B cell (primary cell): ENCODE measurements at regions of chr1 and their contacts with region 1.

Region 1: GRCh38 chr1:186985889-186986491 is 157.2 kb downstream of the PLA2G4A start:
- DNase-seq: peak; percentile 50
- ATAC-seq: no peak
- H3K4me3 ChIP-seq: no peak overlapping the region
- H3K4me3 Mint-ChIP-seq: no peak overlapping the region
- H3K27ac ChIP-seq: no peak overlapping the region
- H3K27ac Mint-ChIP-seq: no peak overlapping the region
- H3K4me1 ChIP-seq: no peaks in the 10 kb centered on the region
- H3K4me1 Mint-ChIP-seq: no peaks in the 10 kb centered on the region
- H3K27me3 ChIP-seq: no peaks in the 10 kb centered on the region
- H3K27me3 Mint-ChIP-seq: no peaks in the 10 kb centered on the region
- CTCF ChIP-seq: peak; percentile 78

Region 2: DNA sequence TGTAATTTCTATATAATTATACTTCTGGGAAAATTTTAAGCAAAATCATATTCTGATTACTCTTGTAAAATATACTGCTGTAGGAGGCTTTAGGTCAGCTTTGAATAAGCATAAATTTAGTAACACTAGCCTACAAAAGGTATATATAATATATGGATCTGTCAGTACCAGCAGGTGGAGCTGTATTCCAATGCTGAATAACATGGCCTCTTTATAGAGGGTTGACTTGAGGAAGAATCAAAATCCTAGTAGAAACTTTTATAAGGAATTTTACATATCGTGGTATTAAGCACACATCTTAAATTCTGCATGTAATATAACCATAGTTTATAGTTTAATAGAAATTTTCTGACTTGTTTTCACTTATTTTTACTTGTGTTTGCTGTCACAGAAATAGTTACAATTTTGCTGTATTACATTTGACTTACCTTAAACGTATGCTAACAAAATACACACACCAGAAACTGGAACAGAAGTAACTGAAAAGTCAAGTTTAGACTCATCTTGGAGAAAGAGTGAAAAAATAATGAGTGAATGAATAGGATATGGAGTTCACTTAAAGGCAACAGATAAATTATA is 1172.5 kb before region 1 on chr1:
- CTCF ChIA-PET with region 1: no interaction called
- POLR2A ChIA-PET with region 1: no interaction called
- intact Hi-C with region 1: loop called (anchors 5 kb)
- DNase-seq: peak; percentile 28
- ATAC-seq: no peak
- H3K4me3 ChIP-seq: no peak overlapping the region
- H3K4me3 Mint-ChIP-seq: no peak overlapping the region
- H3K27ac ChIP-seq: no peak overlapping the region
- H3K27ac Mint-ChIP-seq: no peak overlapping the region
- H3K4me1 ChIP-seq: no peaks in the 10 kb centered on the region
- H3K4me1 Mint-ChIP-seq: no peaks in the 10 kb centered on the region
- H3K27me3 ChIP-seq: no peaks in the 10 kb centered on the region
- H3K27me3 Mint-ChIP-seq: peaks cover 3% of the 10 kb centered on the region
- CTCF ChIP-seq: peak; percentile 66

Region 3: DNA sequence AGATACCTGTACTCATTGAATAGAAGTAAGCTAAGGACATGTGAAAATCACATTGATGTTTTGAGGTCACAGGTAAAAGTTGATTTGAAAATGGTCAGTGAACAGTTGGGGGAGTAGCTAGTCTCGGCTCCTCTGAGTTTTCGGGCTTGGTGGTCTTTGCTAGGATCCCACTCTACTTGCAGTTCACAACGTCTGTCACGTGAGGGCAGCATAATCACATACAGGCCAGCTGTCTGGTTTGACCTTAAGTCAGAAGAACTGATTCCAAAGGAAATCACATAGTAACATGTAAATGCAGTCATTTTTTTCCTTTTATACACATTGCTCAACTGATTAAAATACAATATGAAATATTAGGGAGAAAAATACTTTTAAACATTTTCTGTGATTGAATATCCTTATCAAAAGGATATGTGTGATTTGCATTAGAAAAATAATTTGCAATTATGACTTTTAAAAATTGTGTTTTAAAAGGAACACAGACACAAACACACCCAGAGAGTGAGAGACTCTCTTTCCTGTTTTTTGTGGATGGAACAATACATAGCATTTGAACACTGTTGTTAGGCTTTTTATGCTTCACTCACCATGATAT is 503.2 kb before region 1 on chr1:
- CTCF ChIA-PET with region 1: interaction called, 15 read pairs
- POLR2A ChIA-PET with region 1: no interaction called
- intact Hi-C with region 1: loop called (anchors 1 kb)
- DNase-seq: peak; percentile 67
- ATAC-seq: peak; percentile 43
- H3K4me3 ChIP-seq: no peak overlapping the region
- H3K4me3 Mint-ChIP-seq: no peak overlapping the region
- H3K27ac ChIP-seq: no peak overlapping the region
- H3K27ac Mint-ChIP-seq: no peak overlapping the region
- H3K4me1 ChIP-seq: no peaks in the 10 kb centered on the region
- H3K4me1 Mint-ChIP-seq: peaks cover 2% of the 10 kb centered on the region
- H3K27me3 ChIP-seq: no peaks in the 10 kb centered on the region
- H3K27me3 Mint-ChIP-seq: peaks cover 3% of the 10 kb centered on the region
- CTCF ChIP-seq: peak; percentile 94

Region 4: DNA sequence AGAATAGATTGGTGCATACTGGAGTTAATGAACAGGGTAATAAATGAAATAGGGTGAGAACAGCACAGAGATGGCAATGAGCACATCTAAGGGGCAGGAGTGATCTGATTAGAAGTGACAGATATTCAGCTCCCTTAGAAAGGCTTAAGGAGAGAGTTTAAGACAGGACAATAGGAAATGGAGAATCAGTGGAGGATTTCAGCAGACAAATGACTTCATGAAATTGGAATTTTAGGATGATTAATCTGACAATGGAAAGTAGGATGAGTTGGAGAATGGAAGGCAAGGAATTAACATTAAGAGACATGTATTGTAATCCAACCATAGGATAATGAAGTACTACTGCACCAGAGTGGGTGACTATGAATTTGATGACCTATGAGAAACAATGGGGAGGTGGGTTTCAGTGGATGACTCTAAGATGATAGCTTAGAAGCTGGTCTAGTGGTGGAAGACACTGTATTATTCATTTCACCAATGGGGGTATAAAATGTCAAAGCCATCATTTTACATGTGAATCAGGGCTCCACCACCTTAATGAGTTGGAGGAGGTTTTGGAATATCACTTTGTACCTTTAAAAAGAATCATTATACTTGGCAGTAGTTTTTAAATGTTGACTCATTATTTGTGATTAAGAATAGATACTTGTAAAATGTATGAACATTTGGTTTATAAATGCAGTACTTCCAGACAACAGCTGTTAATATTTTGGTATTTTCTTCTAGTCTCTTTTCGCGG is 18.2 kb before region 1 on chr1:
- CTCF ChIA-PET with region 1: no interaction called
- POLR2A ChIA-PET with region 1: no interaction called
- intact Hi-C with region 1: no loop called
- DNase-seq: no peak
- ATAC-seq: no peak
- H3K4me3 ChIP-seq: no peak overlapping the region
- H3K4me3 Mint-ChIP-seq: no peak overlapping the region
- H3K27ac ChIP-seq: no peak overlapping the region
- H3K27ac Mint-ChIP-seq: no peak overlapping the region
- H3K4me1 ChIP-seq: no peaks in the 10 kb centered on the region
- H3K4me1 Mint-ChIP-seq: no peaks in the 10 kb centered on the region
- H3K27me3 ChIP-seq: no peaks in the 10 kb centered on the region
- H3K27me3 Mint-ChIP-seq: no peaks in the 10 kb centered on the region
- CTCF ChIP-seq: no peak

Region 5: GRCh38 chr1:187836557-187836956 is 850.6 kb after region 1 on chr1:
- CTCF ChIA-PET with region 1: no interaction called
- POLR2A ChIA-PET with region 1: no interaction called
- intact Hi-C with region 1: no loop called
- DNase-seq: no peak
- ATAC-seq: no peak
- H3K4me3 ChIP-seq: no peak overlapping the region
- H3K4me3 Mint-ChIP-seq: no peak overlapping the region
- H3K27ac ChIP-seq: no peak overlapping the region
- H3K27ac Mint-ChIP-seq: no peak overlapping the region
- H3K4me1 ChIP-seq: no peaks in the 10 kb centered on the region
- H3K4me1 Mint-ChIP-seq: no peaks in the 10 kb centered on the region
- H3K27me3 ChIP-seq: no peaks in the 10 kb centered on the region
- H3K27me3 Mint-ChIP-seq: no peaks in the 10 kb centered on the region
- CTCF ChIP-seq: no peak